ENCODE measurements at regions of chr5 and their contacts with region 1.

Region 1: DNA sequence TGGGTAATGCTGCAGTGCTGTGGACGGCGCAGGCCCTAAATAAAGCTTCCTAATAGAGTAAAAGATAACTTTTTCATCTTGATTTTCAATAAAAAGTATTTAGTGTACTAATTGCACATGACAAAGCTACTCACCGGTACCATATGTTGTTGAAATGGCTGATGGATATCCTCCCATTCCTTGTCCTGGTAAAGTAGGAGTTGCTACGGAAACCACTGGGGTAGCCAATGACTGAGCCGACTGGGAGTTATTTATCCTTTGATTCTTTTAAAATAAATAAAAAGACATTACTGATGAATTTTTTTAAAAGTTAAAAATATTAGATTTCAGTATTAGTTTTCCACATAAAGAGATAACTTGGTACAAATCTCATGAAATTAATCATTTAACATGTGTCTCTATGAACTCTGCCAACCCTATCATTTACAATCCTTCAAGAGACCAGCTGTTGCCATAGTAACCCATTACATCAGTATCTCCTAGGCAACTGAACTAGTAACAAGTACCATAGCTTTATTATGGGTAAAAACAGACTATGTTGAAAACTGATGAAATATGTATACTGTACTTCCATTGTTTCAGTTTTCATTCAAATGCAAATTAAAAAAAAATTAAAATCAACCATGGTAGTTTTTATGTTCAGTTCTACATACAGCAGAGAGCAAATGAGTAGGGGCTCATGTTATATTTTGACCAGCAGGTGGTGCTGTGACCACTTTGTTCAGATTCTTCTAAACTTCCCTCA is 153.7 kb downstream of the MEF2C start:
- DNase-seq: peak; percentile 75
- ATAC-seq: peak; percentile 92
- H3K4me3 ChIP-seq: no peak overlapping the region
- H3K27ac ChIP-seq: no peak overlapping the region
- H3K4me1 ChIP-seq: no peaks in the 10 kb centered on the region; a peak in 1 of 4 replicates
- H3K27me3 ChIP-seq: no peaks in the 10 kb centered on the region
- CTCF ChIP-seq: peak; percentile 54 to 76 (median 61); a peak in 5 of 6 replicates
- POLR2A ChIP-seq: no peak
- RAD21 ChIP-seq: peak; percentile 86

Region 2: DNA sequence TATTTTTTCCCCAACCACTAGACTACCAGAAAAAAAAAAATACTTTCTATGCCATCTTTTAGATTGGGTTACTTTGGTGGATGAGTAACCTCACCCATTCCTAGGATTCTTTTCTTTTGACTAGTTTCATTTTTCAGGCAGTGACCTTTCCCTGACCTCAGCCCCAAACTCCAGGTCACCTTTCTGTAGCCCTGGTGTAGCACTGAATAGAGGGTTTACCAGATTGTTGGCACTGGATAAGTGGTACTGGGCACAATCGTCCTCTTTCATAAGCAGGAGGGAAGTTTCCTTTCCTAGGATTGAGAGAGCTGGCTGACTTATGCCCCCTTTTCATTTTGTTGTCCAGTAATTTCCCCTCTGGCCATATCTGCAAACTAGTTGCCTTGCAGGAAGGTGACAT is 291.2 kb before region 1 on chr5:
- CTCF ChIA-PET with region 1: no interaction called
- POLR2A ChIA-PET with region 1: no interaction called
- RAD21 ChIA-PET with region 1: no interaction called
- intact Hi-C with region 1: no loop called
- DNase-seq: peak; percentile 8
- ATAC-seq: peak; percentile 84
- H3K4me3 ChIP-seq: peak overlapping the region in 1 of 2 experiments; percentile 35; a peak in 1 of 4 replicates
- H3K27ac ChIP-seq: no peak overlapping the region
- H3K4me1 ChIP-seq: peaks cover 3 to 17% of the 10 kb centered on the region in 2 experiments; a peak in 3 of 4 replicates
- H3K27me3 ChIP-seq: no peaks in the 10 kb centered on the region
- CTCF ChIP-seq: no peak
- POLR2A ChIP-seq: no peak
- RAD21 ChIP-seq: no peak

Region 3: DNA sequence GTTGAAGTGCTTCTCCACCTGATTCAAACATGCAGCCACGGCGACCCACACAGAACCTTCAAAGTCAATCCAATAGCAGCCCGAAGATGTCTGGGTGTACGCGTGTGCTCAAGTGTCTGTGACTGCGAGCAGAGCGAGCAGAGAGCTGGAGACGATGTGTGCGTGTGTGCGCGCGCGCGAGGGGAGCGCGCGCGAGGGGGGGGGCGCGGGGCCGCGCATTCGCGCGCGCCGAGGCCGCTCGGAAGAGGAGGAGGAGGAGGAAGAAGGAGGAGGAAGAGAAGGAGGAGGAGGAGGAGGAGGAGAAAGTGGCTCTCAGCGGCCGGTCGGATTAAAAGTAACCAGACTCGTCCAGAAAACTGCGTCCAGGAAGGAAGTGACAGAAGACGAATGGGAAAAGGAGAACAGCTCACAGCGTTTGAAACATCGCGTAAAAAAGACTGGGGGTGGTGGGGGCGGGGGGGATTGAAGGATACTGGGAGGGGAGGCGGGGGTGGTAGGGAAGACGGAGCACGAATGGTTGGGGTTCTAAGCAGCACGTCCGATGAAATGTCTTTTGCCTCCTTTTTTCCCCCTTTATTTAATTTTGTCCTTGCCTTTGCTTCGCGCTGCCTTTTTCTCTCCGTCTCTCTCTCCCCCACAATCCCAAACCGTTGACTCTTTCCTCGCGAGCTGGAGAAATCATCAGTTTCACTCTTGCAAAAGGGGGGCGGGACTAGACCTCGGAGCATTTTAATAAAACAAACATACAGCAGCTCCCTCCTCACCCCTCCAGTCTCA is 154.0 kb after region 1 on chr5 and contains the start of gene MEF2C:
- CTCF ChIA-PET with region 1: interaction called, 4 read pairs
- POLR2A ChIA-PET with region 1: no interaction called
- RAD21 ChIA-PET with region 1: no interaction called
- intact Hi-C with region 1: loop called (anchors 5 kb)
- DNase-seq: peak; percentile 56
- ATAC-seq: peak; percentile 70
- H3K4me3 ChIP-seq: peak within 1 kb of the TSS; percentile 61 to 65
- H3K27ac ChIP-seq: peak within 1 kb of the TSS; percentile 56
- H3K4me1 ChIP-seq: peaks cover 12 to 28% of the 10 kb centered on the region in 2 experiments
- H3K27me3 ChIP-seq: no peaks in the 10 kb centered on the region
- CTCF ChIP-seq: no peak
- POLR2A ChIP-seq: peak; percentile 47
- RAD21 ChIP-seq: no peak
- total RNA-seq, gene MEF2C: 13.0 TPM

Region 4: GRCh38 chr5:89359044-89359443 is 629.8 kb after region 1 on chr5:
- CTCF ChIA-PET with region 1: no interaction called
- POLR2A ChIA-PET with region 1: no interaction called
- RAD21 ChIA-PET with region 1: no interaction called
- intact Hi-C with region 1: no loop called
- DNase-seq: no peak
- ATAC-seq: no peak
- H3K4me3 ChIP-seq: no peak overlapping the region
- H3K27ac ChIP-seq: no peak overlapping the region
- H3K4me1 ChIP-seq: no peaks in the 10 kb centered on the region
- H3K27me3 ChIP-seq: no peaks in the 10 kb centered on the region
- CTCF ChIP-seq: no peak
- POLR2A ChIP-seq: no peak
- RAD21 ChIP-seq: no peak

Region 5: DNA sequence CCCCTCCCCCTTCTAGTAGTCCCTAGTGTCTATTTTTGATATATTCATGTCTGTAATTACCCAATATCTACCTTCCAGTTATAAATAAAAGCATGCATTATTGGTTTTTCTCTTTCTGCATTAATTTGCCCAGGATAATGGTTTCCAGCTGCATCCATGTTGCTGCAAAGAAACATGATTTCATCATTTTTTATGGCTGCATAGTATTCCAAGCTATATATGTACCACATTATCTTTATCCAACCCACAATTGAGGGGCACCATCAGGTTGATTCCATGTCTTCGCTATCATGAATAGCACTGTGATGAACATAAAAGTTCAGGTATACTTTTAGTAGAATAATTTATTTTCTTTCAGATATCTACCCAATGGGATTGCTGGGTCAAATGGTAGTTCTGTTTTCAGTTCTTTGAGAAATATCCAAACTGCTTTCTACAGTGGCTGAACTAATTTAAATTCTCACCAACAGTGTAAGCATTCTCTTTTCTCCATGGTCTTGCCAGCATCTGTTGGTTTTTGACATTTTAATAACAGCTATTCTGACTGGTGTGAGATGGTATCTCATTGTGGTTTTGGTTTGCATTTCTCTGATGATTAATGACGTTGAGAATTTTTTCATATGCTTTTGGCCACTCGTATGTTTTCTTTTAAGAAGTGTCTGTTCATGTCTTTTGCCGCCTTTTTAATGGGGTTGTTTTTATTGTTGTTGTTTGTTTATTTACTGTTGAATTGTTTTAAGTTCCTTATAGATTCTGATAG is 899.8 kb after region 1 on chr5:
- CTCF ChIA-PET with region 1: no interaction called
- POLR2A ChIA-PET with region 1: no interaction called
- RAD21 ChIA-PET with region 1: no interaction called
- intact Hi-C with region 1: no loop called
- DNase-seq: no peak
- ATAC-seq: no peak
- H3K4me3 ChIP-seq: no peak overlapping the region
- H3K27ac ChIP-seq: no peak overlapping the region
- H3K4me1 ChIP-seq: no peaks in the 10 kb centered on the region
- H3K27me3 ChIP-seq: no peaks in the 10 kb centered on the region
- CTCF ChIP-seq: no peak
- POLR2A ChIP-seq: no peak
- RAD21 ChIP-seq: no peak

Region 6: DNA sequence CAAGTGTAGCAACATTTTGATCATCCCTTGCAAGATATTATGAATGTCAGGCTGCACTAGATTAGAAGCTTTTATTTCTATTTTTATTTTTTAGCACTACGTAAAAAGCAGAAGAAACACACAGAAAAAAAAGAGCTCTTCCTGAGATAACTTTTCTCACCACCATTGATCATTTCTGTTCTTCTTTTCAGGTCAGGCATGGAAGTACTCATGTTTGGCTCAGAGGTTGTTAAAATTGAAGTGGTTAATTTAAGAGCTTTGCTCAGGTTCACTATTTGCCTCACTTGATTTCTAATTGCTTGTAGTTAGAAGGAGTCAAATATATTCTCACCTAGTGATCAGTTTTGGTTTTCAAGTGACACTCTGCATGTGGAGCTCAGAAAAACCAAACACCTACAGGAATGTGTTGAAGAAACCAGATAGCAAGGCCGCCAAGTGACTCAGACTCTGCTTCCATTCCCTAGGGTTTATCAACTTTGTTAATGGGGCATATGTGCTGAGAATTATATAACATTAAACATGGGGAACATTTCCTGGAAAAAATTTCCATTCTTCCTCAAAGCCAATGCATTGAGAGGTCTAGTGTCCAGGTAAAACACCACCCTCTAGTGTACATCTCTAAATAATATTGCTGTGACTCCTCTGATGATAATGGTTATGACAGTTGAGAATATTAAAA is 1000.5 kb after region 1 on chr5:
- CTCF ChIA-PET with region 1: interaction called, 64 read pairs
- POLR2A ChIA-PET with region 1: no interaction called
- RAD21 ChIA-PET with region 1: interaction called in 1 of 2 experiments, 4 read pairs
- intact Hi-C with region 1: loop called (anchors 2 kb)
- DNase-seq: peak; percentile 21
- ATAC-seq: peak; percentile 76
- H3K4me3 ChIP-seq: no peak overlapping the region
- H3K27ac ChIP-seq: no peak overlapping the region
- H3K4me1 ChIP-seq: no peaks in the 10 kb centered on the region
- H3K27me3 ChIP-seq: no peaks in the 10 kb centered on the region
- CTCF ChIP-seq: peak; percentile 42 to 61 (median 52); a peak in 4 of 6 replicates
- POLR2A ChIP-seq: no peak
- RAD21 ChIP-seq: peak; percentile 82

Region 7: DNA sequence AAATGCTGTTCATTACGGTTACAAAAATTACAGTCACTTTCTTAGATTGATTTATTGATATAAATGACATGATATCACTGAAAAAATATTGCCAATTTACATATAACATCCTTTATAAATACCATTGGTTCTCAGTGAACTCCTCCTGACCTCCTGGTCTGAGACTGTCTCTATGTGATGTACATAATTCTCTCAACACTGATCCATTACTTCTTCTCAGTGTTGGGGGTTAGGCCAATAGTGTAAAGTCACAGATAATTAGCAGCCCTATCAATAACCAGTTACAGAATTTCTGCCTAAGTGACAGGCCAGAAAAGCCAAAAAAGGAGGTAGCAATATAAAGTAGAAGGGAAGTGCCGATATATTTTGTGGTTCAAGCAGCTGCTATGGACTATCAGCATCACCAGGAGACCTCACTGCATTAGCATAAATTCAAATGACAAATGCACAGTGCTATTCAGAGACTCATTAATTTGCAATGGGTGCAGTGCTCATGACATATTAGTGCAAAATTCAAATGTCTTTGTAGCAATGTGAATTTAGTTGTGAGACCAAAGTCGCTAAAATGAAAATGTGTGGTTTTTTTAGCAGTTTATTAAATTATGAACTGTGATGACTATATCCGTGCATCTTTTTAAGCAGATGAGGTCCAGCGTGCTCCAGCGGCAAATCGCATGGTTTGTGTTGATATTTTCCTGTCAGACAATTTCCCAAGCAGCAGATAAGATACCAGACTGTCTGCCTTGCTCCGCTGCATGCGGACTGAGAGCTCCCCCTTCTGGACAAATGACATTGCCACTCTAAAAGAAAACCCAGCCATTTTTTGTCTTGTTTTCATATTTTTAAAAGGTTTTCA is 1535.7 kb after region 1 on chr5:
- CTCF ChIA-PET with region 1: interaction called, 36 read pairs
- POLR2A ChIA-PET with region 1: no interaction called
- RAD21 ChIA-PET with region 1: interaction called in 1 of 2 experiments, 3 read pairs
- intact Hi-C with region 1: loop called (anchors 1 kb)
- DNase-seq: peak; percentile 58
- ATAC-seq: peak; percentile 83
- H3K4me3 ChIP-seq: no peak overlapping the region
- H3K27ac ChIP-seq: no peak overlapping the region
- H3K4me1 ChIP-seq: no peaks in the 10 kb centered on the region
- H3K27me3 ChIP-seq: no peaks in the 10 kb centered on the region
- CTCF ChIP-seq: peak; percentile 70 to 97 (median 92)
- POLR2A ChIP-seq: no peak
- RAD21 ChIP-seq: peak; percentile 93

Region 8: GRCh38 chr5:90434116-90434714 is 1705.0 kb after region 1 on chr5:
- CTCF ChIA-PET with region 1: interaction called, 4 read pairs
- POLR2A ChIA-PET with region 1: no interaction called
- RAD21 ChIA-PET with region 1: no interaction called
- intact Hi-C with region 1: loop called (anchors 2 kb)
- DNase-seq: peak; percentile 31
- ATAC-seq: peak; percentile 88
- H3K4me3 ChIP-seq: no peak overlapping the region
- H3K27ac ChIP-seq: no peak overlapping the region
- H3K4me1 ChIP-seq: no peaks in the 10 kb centered on the region
- H3K27me3 ChIP-seq: no peaks in the 10 kb centered on the region
- CTCF ChIP-seq: peak; percentile 37 to 85 (median 81); a peak in 5 of 6 replicates
- POLR2A ChIP-seq: no peak
- RAD21 ChIP-seq: peak; percentile 74

Measured in HCT116 (cell line).